Breast epithelium (tissue), 4 donors: ENCODE measurements at regions of chr19 and their contacts with region 1.

Region 1: GRCh38 chr19:17385878-17386611 is 8.0 kb downstream of the CCDC194 start:
- DNase-seq: peak in 1 of 2 donors; percentile 59
- H3K4me3 ChIP-seq: no peak overlapping the region
- H3K27ac ChIP-seq: no peak overlapping the region
- H3K4me1 ChIP-seq: peaks cover 0 to 2% of the 10 kb centered on the region in 2 donors
- H3K27me3 ChIP-seq: no peaks in the 10 kb centered on the region
- CTCF ChIP-seq: peak; percentile 68 to 88 (median 83)
- POLR2A ChIP-seq: no peak

Region 2: DNA sequence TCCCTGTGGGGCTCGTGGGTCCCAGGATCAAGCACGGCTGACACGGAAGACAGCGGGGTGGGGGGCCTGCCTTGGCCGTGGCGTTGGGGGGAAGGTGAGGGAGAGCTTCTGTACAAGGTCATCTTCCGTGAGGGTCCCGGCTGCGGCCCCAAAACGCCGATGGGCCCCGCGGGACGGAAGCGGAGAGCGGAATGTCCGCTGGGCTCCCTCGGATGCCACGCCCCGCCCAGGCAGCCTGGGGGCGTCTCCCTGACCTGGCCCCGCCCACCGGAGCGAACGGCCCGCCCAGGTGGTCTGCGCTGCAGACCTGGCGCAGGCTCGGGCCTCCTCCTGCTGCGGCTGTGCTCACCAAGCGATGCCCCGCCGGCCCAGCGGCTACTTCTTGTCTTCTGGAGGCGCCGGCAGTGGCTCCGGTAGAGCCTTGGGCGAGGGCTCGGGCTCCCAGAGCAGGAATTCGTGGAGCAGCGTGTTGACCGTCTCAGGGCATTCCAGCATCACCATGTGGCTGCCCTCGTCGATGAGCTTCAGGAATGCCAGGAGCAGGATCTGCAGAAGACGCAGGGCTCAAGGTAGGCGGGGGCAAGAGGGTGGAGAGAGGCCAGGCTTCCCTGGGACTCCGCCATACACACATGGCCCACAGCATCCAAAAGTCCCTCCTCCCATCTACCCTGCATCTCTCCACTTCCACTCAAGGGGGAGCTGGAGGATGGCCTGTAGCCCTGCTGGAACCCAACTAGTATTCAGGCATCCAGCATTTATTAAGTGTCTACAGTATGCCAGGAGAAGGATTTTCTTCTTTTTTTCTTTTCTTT is 93.6 kb before region 1 on chr19:
- intact Hi-C with region 1: no loop called
- DNase-seq: peak in 1 of 2 donors; percentile 79
- H3K4me3 ChIP-seq: peak overlapping the region; percentile 41 to 74 (median 51)
- H3K27ac ChIP-seq: peak overlapping the region; percentile 79 to 90
- H3K4me1 ChIP-seq: no peaks in the 10 kb centered on the region
- H3K27me3 ChIP-seq: no peaks in the 10 kb centered on the region
- CTCF ChIP-seq: peak; percentile 45 to 69 (median 66)
- POLR2A ChIP-seq: no peak

Region 3: DNA sequence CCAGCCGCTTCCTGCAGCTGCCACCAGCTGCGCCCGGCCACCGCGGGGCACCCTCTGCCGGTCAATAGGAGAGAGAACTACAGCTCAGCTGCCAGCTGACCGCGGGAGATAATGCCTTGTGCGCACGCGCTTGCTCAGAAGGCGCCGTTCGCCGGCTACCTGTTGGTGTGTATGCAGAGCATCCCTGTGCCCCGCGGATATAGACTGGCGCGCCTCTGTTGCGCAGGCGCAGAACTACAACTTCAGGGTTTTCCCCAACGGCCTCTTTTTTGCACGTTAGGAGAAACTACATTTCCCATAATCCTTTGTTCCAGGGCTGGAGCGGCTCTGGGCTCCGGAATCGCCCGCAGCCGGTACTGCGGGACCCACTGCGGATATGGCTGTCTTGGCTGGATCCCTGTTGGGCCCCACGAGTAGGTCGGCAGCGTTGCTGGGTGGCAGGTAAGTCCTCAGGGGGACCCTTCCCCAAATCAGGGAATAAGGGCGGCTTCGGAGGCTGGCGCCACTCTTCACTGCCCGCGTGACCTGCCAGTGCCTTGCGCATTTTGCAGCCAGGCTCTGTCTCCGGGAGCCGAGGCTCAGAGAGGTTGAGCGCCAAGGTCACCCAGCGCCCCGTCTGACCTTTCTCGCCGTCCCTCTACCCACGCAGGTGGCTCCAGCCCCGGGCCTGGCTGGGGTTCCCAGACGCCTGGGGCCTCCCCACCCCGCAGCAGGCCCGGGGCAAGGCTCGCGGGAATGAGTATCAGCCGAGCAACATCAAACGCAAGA is 80.3 kb before region 1 on chr19 and contains the start of gene MRPL34:
- intact Hi-C with region 1: loop called (anchors 10 kb)
- DNase-seq: peak; percentile 98 to 99
- H3K4me3 ChIP-seq: peak within 1 kb of the TSS; percentile 60 to 79 (median 70)
- H3K27ac ChIP-seq: peak within 1 kb of the TSS; percentile 86 to 90
- H3K4me1 ChIP-seq: peaks cover 4 to 36% of the 10 kb centered on the region in 2 donors
- H3K27me3 ChIP-seq: no peaks in the 10 kb centered on the region
- CTCF ChIP-seq: peak; percentile 77 to 98 (median 95)
- POLR2A ChIP-seq: no peak
- total RNA-seq, gene MRPL34: 88.5 to 139 (median 98.0) TPM